ENCODE measurements at regions of chr18 and their contacts with region 1.

Region 1: DNA sequence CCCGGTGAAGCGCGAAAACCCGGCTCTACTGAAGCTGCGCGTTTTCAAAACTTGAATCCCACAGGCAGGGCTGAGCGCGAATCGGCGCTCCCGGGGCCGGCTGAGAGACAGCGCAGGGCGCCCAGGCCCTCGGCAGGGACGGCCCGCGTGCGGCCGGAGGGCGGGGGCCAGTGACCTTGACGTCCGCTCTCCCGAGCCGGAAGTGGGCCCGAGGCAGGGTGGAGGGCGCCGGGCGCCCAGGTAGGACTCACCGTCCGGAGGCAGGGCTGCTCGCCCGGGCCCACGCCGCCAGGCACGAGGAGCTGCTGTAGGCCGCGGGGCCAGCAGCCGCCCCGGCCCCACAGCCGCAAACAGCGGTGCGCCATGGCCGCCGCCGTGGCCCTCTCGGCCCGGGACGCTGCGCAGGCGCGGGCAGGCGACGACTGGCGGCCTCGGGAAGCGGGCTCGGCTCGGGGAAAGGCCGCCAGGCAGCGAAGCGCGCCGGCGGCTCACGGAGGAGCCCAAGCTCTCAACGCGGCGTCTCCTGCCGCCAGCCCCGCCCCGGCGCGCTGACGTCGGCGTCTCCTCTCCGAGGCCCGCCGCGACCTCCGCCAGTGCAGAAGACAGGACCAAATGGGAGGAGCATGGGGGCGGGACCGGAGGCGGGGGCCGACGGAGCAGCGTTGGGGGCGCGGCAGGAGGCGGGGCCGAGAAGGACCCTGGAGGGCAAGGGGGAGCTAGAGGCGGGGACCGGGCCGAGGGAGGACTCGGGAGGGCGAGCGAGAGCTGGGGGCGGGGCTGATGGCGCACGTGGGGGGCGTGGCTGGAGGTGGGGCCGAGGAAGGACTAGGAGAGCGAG is at the start of gene AFG3L2:
- DNase-seq: peak; percentile 100
- H3K4me3 ChIP-seq: peak within 1 kb of the TSS; percentile 73 to 88
- H3K4me3 Mint-ChIP-seq: peak within 1 kb of the TSS; percentile 88 to 94 (median 92)
- H3K27ac ChIP-seq: peak within 1 kb of the TSS; percentile 98
- H3K27ac Mint-ChIP-seq: peak within 1 kb of the TSS; percentile 90 to 97 (median 93)
- H3K4me1 ChIP-seq: peaks cover 43% of the 10 kb centered on the region
- H3K4me1 Mint-ChIP-seq: peaks cover 27 to 54% (median 42%) of the 10 kb centered on the region in 4 donors
- H3K27me3 ChIP-seq: no peaks in the 10 kb centered on the region
- H3K27me3 Mint-ChIP-seq: no peaks in the 10 kb centered on the region
- total RNA-seq, gene AFG3L2: 31.4 to 33.1 TPM

Region 2: DNA sequence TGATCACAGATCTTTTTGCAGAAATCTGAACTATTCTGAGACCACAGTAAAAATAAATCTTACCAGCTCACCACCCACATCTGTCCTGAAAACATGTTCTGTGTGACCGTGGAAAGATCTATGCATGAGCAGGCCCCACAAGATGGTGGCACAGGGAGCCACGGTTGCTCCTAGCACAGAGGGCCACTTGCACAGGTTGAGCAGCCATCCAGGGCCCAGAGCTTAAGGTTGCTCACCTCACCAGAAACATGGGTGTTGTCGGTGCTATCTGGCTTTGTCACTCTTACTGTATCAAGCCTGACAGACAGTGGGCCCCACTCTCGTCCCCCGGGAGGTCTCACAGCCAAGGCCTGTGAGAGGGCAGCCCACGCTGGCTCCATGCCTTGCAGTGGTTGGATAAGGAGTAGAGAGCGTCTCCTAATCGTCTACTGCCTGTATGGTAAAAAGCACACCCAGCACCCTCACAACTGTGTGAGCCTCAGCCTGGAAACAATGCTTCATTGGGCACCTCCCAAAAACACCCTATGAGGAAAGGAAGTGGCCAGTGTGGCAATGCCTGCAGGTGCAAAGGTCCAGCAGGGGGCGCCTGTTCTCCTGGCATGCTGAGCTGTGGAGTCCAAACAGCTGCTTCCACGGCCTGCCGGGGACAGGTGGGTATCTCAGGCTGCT is 49.3 kb before region 1 on chr18:
- CTCF ChIA-PET with region 1: interaction called, 14 read pairs
- POLR2A ChIA-PET with region 1: no interaction called
- intact Hi-C with region 1: no loop called
- DNase-seq: peak; percentile 47 to 59 (median 56)
- H3K4me3 ChIP-seq: no peak overlapping the region
- H3K4me3 Mint-ChIP-seq: no peak overlapping the region
- H3K27ac ChIP-seq: no peak overlapping the region
- H3K27ac Mint-ChIP-seq: peak overlapping the region in 1 of 7 donors; percentile 48
- H3K4me1 ChIP-seq: no peaks in the 10 kb centered on the region
- H3K4me1 Mint-ChIP-seq: peaks cover 0 to 4% (median 1%) of the 10 kb centered on the region in 4 donors
- H3K27me3 ChIP-seq: no peaks in the 10 kb centered on the region
- H3K27me3 Mint-ChIP-seq: no peaks in the 10 kb centered on the region

Region 3: GRCh38 chr18:12657684-12658425 is 280.9 kb after region 1 on chr18 and contains the start of gene SPIRE1:
- CTCF ChIA-PET with region 1: no interaction called
- POLR2A ChIA-PET with region 1: interaction called, 5 read pairs
- intact Hi-C with region 1: loop called (anchors 1 kb)
- DNase-seq: peak in 4 of 5 donors; percentile 32 to 43 (median 39)
- H3K4me3 ChIP-seq: peak within 1 kb of the TSS; percentile 42 to 63
- H3K4me3 Mint-ChIP-seq: peak within 1 kb of the TSS; percentile 84 to 94 (median 92)
- H3K27ac ChIP-seq: no peak within 1 kb of the TSS
- H3K27ac Mint-ChIP-seq: peak within 1 kb of the TSS; percentile 11 to 87 (median 75)
- H3K4me1 ChIP-seq: peaks cover 9% of the 10 kb centered on the region
- H3K4me1 Mint-ChIP-seq: peaks cover 13 to 21% (median 17%) of the 10 kb centered on the region in 4 donors
- H3K27me3 ChIP-seq: no peaks in the 10 kb centered on the region
- H3K27me3 Mint-ChIP-seq: peaks cover 1 to 2% of the 10 kb centered on the region in 2 donors
- total RNA-seq, gene SPIRE1: 1.7 to 1.8 TPM

Region 4: GRCh38 chr18:12947355-12948041 is 570.6 kb after region 1 on chr18 and contains the start of gene SEH1L:
- CTCF ChIA-PET with region 1: no interaction called
- POLR2A ChIA-PET with region 1: interaction called, 26 read pairs
- intact Hi-C with region 1: loop called (anchors 1 kb)
- DNase-seq: peak; percentile 97 to 98 (median 98)
- H3K4me3 ChIP-seq: peak within 1 kb of the TSS; percentile 79 to 89
- H3K4me3 Mint-ChIP-seq: peak within 1 kb of the TSS; percentile 92 to 98 (median 96)
- H3K27ac ChIP-seq: peak within 1 kb of the TSS; percentile 90
- H3K27ac Mint-ChIP-seq: peak within 1 kb of the TSS; percentile 86 to 99 (median 98)
- H3K4me1 ChIP-seq: peaks cover 36% of the 10 kb centered on the region
- H3K4me1 Mint-ChIP-seq: peaks cover 20 to 40% (median 31%) of the 10 kb centered on the region in 4 donors
- H3K27me3 ChIP-seq: no peaks in the 10 kb centered on the region
- H3K27me3 Mint-ChIP-seq: no peaks in the 10 kb centered on the region
- total RNA-seq, gene SEH1L: 28.9 to 31.3 TPM

Region 5: DNA sequence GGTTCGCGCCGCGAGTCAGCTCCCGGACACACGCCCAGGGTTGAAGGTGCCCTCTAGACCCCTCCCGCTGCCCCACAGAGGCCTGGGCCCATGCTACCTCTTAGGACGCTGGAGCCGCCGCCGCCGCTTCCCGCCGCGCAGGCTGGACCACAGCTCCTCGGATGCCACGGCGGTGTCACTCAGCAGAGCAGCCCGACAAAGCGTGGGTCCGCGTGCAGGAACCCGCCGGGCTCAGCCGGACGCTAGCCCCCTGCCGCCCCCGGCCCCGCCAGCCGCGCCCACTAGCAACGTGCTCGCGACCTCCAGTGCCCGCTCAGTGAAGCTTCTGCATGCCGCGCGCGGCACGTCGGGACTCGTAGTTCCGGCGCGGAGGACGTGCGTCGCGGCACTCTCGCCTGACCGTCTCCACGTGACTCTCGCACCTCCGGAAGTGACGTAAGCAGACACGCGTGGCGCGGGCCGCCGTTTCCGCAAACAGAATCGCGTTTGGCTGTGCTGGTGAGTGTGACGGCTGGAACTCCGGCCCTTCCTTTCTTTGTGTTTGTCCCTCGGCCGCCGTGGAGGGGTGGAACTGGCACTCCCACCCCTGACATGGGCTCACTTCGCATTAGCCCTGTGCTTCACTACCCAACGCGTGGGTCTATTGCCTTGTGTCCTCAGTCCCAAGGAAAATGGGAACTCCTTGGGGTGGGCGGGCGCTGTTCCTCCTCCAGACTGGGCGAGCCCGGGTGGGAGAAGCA is 1349.5 kb after region 1 on chr18 and contains the starts of genes FAM210A and RNMT:
- CTCF ChIA-PET with region 1: no interaction called
- POLR2A ChIA-PET with region 1: interaction called, 10 read pairs
- intact Hi-C with region 1: no loop called
- DNase-seq: peak; percentile 90 to 95 (median 92)
- H3K4me3 ChIP-seq: peak within 1 kb of the TSS; percentile 76 to 78
- H3K4me3 Mint-ChIP-seq: peak within 1 kb of the TSS; percentile 87 to 97 (median 92)
- H3K27ac ChIP-seq: peak within 1 kb of the TSS; percentile 96
- H3K27ac Mint-ChIP-seq: peak within 1 kb of the TSS; percentile 85 to 98 (median 97)
- H3K4me1 ChIP-seq: peaks cover 49% of the 10 kb centered on the region
- H3K4me1 Mint-ChIP-seq: peaks cover 41 to 67% (median 51%) of the 10 kb centered on the region in 4 donors
- H3K27me3 ChIP-seq: no peaks in the 10 kb centered on the region
- H3K27me3 Mint-ChIP-seq: no peaks in the 10 kb centered on the region
- total RNA-seq, gene FAM210A: 9.4 to 10.2 TPM
- total RNA-seq, gene RNMT: 53.7 to 55.0 TPM

Measured in CD4-positive, alpha-beta memory T cell (primary cell).